ENCODE measurements at regions of chr7 and their contacts with region 1.

Region 1: DNA sequence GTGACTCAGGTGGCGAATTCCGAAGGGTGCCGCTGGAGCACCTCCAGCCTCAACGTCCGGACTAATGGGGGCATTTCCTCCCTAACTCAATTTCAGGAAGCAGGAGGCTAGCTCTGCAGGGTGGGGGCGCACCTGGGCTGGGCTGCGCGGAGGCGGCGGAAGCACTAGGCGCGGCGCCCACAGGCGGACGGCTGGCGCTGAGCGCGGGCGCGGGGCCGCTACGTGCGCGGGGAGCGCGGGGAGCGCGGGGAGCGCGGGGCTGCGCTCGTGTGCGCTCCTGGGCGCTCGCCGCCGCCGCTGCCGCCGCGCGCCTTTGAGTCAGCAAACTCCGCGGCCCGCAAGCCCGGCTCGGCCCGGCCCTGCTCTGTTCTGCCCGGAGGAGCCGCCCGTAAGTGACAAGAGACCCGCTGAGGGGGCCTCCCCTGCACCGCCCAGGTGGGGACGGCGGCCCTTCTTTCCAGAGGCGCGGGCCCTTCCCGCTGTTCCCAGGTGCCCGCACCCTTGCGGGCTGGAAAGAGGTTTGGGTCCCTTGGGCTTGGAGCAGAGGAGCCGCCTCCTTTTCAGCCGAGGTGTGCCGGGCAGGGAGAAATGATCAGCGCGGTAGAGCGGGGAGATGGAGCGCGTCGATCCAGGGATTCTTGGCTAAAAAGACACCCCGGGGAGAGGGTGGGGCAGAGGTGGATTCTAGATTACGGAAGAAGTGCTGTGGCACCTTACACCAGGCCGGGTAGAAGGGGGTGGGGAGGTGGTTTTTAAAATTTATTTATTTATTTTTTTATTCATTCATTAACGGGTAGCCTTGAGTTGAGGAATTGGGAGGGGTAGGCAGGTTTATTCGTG is at the start of gene SNX10:
- DNase-seq: peak; percentile 52 to 74 (median 72)
- ATAC-seq: peak; percentile 90
- H3K4me3 ChIP-seq: peak within 1 kb of the TSS; percentile 88
- H3K4me3 Mint-ChIP-seq: peak within 1 kb of the TSS; percentile 78 to 94 (median 91)
- H3K27ac ChIP-seq: peak within 1 kb of the TSS; percentile 58
- H3K27ac Mint-ChIP-seq: peak within 1 kb of the TSS; percentile 45 to 91 (median 82)
- H3K4me1 ChIP-seq: peaks cover 25 to 30% of the 10 kb centered on the region in 2 donors
- H3K4me1 Mint-ChIP-seq: peaks cover 22 to 41% (median 35%) of the 10 kb centered on the region in 7 donors
- H3K27me3 ChIP-seq: no peaks in the 10 kb centered on the region
- H3K27me3 Mint-ChIP-seq: peaks cover 0 to 13% (median 0%) of the 10 kb centered on the region in 5 donors
- total RNA-seq, gene SNX10: 5.0 to 37.0 (median 6.3) TPM

Region 2: DNA sequence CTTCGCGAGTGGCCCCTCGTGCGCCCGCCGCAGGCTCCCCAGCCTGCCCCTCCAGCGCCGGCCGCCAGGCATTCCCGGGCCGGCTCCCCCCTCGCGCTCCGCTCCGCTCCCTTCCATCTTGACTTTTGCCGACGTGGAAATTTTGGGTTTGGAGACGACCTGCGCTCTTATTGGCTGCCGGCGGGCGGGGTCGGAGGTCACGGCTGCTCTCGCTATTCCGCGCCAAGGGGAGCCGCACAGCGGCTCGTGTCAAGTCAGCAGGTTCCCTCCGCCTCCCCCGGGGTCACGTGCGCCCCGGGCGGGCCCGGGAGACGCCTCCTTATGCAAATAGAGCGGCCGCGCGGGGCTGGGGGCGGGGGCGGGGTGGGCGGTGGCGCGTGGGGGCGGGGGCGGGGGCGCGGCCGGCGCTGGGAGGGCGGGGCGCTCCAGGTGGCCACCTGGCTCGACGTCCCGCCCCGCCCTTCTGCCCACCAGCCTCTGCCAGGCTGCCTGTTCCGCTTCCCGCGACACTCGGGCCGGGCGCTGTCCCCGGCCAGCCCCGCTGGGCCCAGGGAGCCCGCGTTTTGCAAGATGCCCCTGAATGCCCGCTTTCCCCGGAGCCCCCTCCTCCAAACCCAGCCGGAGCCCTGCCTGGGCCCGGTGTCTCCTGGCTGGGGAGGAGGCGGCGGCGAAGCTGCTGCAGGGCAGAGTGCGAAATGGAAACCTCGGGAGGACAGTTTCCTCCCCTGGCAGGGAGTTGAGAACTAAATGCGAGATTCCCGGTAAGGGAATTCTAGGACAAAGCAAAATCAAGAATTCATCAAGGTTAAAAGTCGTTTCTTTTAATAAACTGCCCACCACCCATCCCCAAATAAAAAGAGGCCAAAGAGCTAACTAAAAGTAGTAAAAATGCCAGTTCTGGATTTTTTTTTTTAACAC is 340.6 kb before region 1 on chr7:
- CTCF ChIA-PET with region 1: no interaction called
- POLR2A ChIA-PET with region 1: no interaction called
- intact Hi-C with region 1: loop called in 1 of 2 experiments (anchors 1 kb)
- DNase-seq: peak; percentile 70 to 94 (median 87)
- ATAC-seq: peak; percentile 99
- H3K4me3 ChIP-seq: peak overlapping the region; percentile 61
- H3K4me3 Mint-ChIP-seq: peak overlapping the region; percentile 87 to 94 (median 92)
- H3K27ac ChIP-seq: peak overlapping the region; percentile 52
- H3K27ac Mint-ChIP-seq: peak overlapping the region in 7 of 9 donors; percentile 45 to 87 (median 81)
- H3K4me1 ChIP-seq: peaks cover 7 to 14% of the 10 kb centered on the region in 2 donors
- H3K4me1 Mint-ChIP-seq: peaks cover 16 to 31% (median 20%) of the 10 kb centered on the region in 7 donors
- H3K27me3 ChIP-seq: no peaks in the 10 kb centered on the region
- H3K27me3 Mint-ChIP-seq: peaks cover 0 to 22% (median 5%) of the 10 kb centered on the region in 5 donors

Region 3: GRCh38 chr7:26278770-26279169 is 13.1 kb before region 1 on chr7:
- CTCF ChIA-PET with region 1: no interaction called
- POLR2A ChIA-PET with region 1: no interaction called
- intact Hi-C with region 1: loop called in 1 of 2 experiments (anchors 1 kb)
- DNase-seq: no peak
- ATAC-seq: peak; percentile 69
- H3K4me3 ChIP-seq: no peak overlapping the region
- H3K4me3 Mint-ChIP-seq: peak overlapping the region in 1 of 10 donors; percentile 50
- H3K27ac ChIP-seq: no peak overlapping the region
- H3K27ac Mint-ChIP-seq: no peak overlapping the region
- H3K4me1 ChIP-seq: no peaks in the 10 kb centered on the region
- H3K4me1 Mint-ChIP-seq: peaks cover 0 to 18% (median 12%) of the 10 kb centered on the region in 7 donors
- H3K27me3 ChIP-seq: no peaks in the 10 kb centered on the region
- H3K27me3 Mint-ChIP-seq: peaks cover 0 to 2% (median 0%) of the 10 kb centered on the region in 5 donors

Region 4: GRCh38 chr7:26305463-26306273 is 13.7 kb after region 1 on chr7:
- CTCF ChIA-PET with region 1: interaction called, 4 read pairs
- POLR2A ChIA-PET with region 1: no interaction called
- intact Hi-C with region 1: loop called in 1 of 2 experiments (anchors 1 kb)
- DNase-seq: peak in 6 of 9 donors; percentile 15 to 37 (median 30)
- ATAC-seq: peak; percentile 72
- H3K4me3 ChIP-seq: no peak overlapping the region
- H3K4me3 Mint-ChIP-seq: peak overlapping the region in 9 of 10 donors; percentile 26 to 74 (median 58)
- H3K27ac ChIP-seq: no peak overlapping the region
- H3K27ac Mint-ChIP-seq: peak overlapping the region; percentile 9 to 89 (median 63)
- H3K4me1 ChIP-seq: peaks cover 0 to 5% of the 10 kb centered on the region in 2 donors
- H3K4me1 Mint-ChIP-seq: peaks cover 13 to 32% (median 26%) of the 10 kb centered on the region in 7 donors
- H3K27me3 ChIP-seq: no peaks in the 10 kb centered on the region
- H3K27me3 Mint-ChIP-seq: no peaks in the 10 kb centered on the region